Thyroid gland (tissue), 4 donors: ENCODE measurements at regions of chrX and their contacts with region 1.

Region 1: DNA sequence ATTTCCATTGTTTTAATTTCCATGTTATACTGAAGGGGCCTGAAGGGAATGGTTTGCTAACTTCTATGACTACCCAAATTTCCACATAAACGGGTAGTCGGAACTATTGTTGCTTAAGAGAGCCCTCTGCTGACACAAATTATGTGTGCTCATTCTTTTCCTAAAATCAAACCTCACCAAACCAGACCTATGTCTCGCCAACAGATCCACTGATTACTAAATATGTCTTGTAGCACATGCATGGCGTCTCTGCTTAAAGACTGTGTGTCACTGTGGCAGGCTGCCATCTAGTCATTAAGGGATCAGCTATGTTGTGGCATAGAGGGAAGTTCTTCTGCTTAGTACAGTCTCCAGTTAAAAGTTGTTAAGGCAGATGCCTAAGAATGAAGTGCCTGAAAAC is 25.1 kb downstream of the PIR start:
- DNase-seq: peak in 1 of 2 donors; percentile 8
- H3K4me3 ChIP-seq: no peak overlapping the region
- H3K27ac ChIP-seq: no peak overlapping the region
- H3K4me1 ChIP-seq: peaks cover 0 to 8% of the 10 kb centered on the region in 2 donors
- H3K27me3 ChIP-seq: no peaks in the 10 kb centered on the region
- CTCF ChIP-seq: peak in 4 of 6 experiments; percentile 16 to 42 (median 25)
- POLR2A ChIP-seq: no peak

Region 2: GRCh38 chrX:15349046-15349445 is 119.0 kb before region 1 on chrX:
- intact Hi-C with region 1: loop called (anchors 10 kb)
- DNase-seq: peak; percentile 27 to 33
- H3K4me3 ChIP-seq: no peak overlapping the region
- H3K27ac ChIP-seq: no peak overlapping the region
- H3K4me1 ChIP-seq: no peaks in the 10 kb centered on the region
- H3K27me3 ChIP-seq: no peaks in the 10 kb centered on the region
- CTCF ChIP-seq: peak; percentile 12 to 49 (median 38)
- POLR2A ChIP-seq: no peak

Region 3: DNA sequence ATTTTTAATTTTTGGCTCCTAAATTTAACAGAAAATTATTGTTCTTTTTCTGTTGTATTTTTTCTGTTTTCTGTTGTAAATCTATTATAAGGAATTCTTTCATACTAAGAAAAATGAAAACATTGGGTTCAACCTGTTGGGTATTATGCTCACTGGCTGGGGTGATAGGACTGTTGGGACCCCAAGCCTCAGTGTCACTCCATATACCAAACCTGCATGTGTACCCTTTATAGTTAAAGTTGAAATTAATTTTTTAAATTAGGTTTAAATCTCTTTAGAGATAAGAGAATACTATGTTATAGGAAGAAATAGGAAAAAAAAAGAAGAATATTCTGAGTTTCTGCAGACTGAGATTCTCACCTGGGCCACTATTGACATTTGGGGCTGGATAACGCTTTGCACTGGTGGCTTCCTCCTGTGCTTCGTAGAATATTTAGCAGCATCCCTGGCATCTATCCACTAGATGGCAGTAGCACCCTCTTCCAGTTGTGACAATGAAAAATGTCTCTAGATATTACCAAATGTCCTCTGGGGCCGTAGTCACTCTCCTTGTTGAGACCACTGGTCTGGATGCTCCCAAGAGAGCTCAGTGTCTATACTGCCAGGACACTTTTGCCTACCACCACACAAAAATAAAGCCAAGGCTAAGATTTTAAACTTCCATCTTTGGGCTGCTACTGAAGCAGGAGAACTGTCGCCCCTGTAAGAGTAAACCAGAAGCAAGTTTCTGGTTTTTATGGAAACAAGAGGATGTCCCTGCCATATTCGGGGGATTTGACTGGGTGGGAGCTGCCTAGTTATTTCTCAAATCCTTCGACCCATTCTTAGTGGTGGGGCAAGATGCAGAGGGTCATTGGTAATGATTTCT is 219.0 kb after region 1 on chrX:
- intact Hi-C with region 1: no loop called
- DNase-seq: peak; percentile 33 to 45
- H3K4me3 ChIP-seq: no peak overlapping the region
- H3K27ac ChIP-seq: no peak overlapping the region
- H3K4me1 ChIP-seq: no peaks in the 10 kb centered on the region
- H3K27me3 ChIP-seq: no peaks in the 10 kb centered on the region
- CTCF ChIP-seq: peak; percentile 28 to 65 (median 51)
- POLR2A ChIP-seq: no peak

Region 4: GRCh38 chrX:15737960-15738902 is 270.2 kb after region 1 on chrX and contains the start of gene CA5B:
- intact Hi-C with region 1: no loop called
- DNase-seq: peak; percentile 90 to 91
- H3K4me3 ChIP-seq: peak within 1 kb of the TSS in 2 of 3 donors; percentile 12 to 43
- H3K27ac ChIP-seq: no peak within 1 kb of the TSS
- H3K4me1 ChIP-seq: no peaks in the 10 kb centered on the region
- H3K27me3 ChIP-seq: no peaks in the 10 kb centered on the region
- CTCF ChIP-seq: no peak
- POLR2A ChIP-seq: peak in 1 of 2 donors; percentile 54
- total RNA-seq, gene CA5B: 9.9 to 31.6 (median 14.9) TPM